Aorta (tissue), 5 donors: ENCODE measurements at regions of chr1 and their contacts with region 1.

Region 1: GRCh38 chr1:19596714-19597495 is 47.2 kb upstream of the NBL1 start:
- DNase-seq: peak; percentile 98
- ATAC-seq: peak; percentile 98
- H3K4me3 ChIP-seq: peak overlapping the region; percentile 64 to 80
- H3K27ac ChIP-seq: peak overlapping the region; percentile 49 to 79
- H3K4me1 ChIP-seq: peaks cover 0 to 13% of the 10 kb centered on the region in 2 donors
- H3K27me3 ChIP-seq: no peaks in the 10 kb centered on the region

Region 2: DNA sequence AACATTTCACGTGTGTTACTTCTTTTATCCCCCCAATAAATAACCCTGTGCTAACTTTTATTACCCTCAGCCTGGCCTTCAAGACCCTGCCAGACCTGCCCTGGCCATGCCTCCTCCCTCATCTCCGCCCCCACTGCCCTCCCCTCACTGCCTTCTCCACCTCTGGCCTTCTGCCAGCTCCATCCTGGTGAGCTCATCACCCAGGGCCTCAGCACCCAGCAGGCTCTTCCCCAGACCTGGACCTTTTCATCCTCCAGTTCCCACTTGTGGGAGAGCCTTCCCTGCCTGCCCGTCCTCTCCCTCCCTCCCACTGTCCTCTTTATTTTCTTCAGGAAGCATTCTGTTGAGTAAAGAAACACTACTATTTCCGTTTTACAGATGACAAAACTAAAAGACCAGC is 212.8 kb before region 1 on chr1:
- intact Hi-C with region 1: loop called in 1 of 2 experiments (anchors 10 kb)
- DNase-seq: peak; percentile 74 to 89
- ATAC-seq: no peak
- H3K4me3 ChIP-seq: no peak overlapping the region
- H3K27ac ChIP-seq: peak overlapping the region in 1 of 2 donors; percentile 82
- H3K4me1 ChIP-seq: peaks cover 2 to 9% of the 10 kb centered on the region in 2 donors
- H3K27me3 ChIP-seq: no peaks in the 10 kb centered on the region

Region 3: DNA sequence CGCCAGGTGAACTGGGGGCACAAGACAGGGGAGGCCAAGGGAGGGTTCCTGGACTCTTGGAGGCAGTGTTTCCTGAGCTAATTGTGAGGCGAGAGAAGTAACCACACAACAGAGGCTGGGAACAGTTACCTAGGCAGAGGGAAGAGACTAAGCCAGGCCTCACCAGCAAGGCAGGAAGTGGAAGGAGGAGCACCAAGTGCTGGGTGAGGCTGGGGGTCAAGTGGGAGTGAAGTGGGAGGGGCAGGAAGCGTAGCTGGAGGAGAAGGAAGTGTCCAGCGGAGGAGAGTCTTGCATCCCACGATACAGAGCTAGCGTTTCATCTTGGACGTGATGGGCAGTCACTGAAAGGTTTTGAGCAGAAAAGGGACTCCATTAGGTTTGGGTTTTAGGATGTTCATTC is 63.3 kb before region 1 on chr1:
- intact Hi-C with region 1: no loop called
- DNase-seq: peak in 1 of 2 donors; percentile 64
- ATAC-seq: no peak
- H3K4me3 ChIP-seq: no peak overlapping the region
- H3K27ac ChIP-seq: no peak overlapping the region
- H3K4me1 ChIP-seq: peaks cover 0 to 1% of the 10 kb centered on the region in 2 donors
- H3K27me3 ChIP-seq: no peaks in the 10 kb centered on the region

Region 4: GRCh38 chr1:19643602-19644394 is 46.9 kb after region 1 on chr1 and contains the start of gene NBL1:
- intact Hi-C with region 1: loop called (anchors 1 to 5 kb)
- DNase-seq: peak; percentile 86 to 92
- ATAC-seq: peak; percentile 81
- H3K4me3 ChIP-seq: peak within 1 kb of the TSS; percentile 38 to 89
- H3K27ac ChIP-seq: peak within 1 kb of the TSS; percentile 73 to 78
- H3K4me1 ChIP-seq: no peaks in the 10 kb centered on the region
- H3K27me3 ChIP-seq: no peaks in the 10 kb centered on the region
- total RNA-seq, gene NBL1: 134 to 188 TPM

Region 5: DNA sequence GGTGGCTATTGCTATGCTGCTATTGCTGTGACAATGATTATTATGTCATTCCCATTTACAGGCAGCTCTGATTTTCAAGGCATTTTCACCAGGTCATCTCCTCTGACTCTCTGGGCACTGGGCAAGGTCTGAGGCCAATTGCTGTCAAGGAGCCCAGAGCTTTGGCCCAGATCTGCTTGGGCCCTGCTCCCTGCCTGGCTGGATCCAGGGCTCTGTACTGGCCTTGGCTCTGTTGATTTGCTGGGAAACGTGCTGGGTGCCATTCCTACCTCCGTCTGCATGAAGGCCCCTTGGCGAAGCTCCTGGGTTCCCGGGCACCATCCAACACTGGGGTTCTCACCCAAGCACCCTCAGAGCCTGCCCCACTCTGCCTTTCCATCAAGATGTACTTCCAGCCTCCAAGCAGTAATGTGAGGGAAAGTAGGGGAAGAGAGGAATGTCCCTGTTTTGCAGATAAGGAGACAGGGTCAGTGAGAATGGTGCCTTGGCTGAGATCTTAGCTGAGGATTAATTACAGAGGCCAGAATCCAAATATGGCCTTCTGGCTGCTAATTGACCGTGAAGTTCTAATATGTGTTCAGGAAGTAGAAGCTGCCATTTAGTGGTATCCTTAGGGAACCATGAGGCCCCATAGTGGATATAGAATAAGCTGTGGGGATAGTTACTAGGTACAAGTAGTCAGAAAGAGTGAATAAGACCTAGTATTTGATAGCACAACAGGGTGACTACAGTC is 131.7 kb after region 1 on chr1:
- intact Hi-C with region 1: no loop called
- DNase-seq: no peak
- ATAC-seq: peak; percentile 57
- H3K4me3 ChIP-seq: no peak overlapping the region
- H3K27ac ChIP-seq: peak overlapping the region in 1 of 2 donors; percentile 86
- H3K4me1 ChIP-seq: no peaks in the 10 kb centered on the region
- H3K27me3 ChIP-seq: no peaks in the 10 kb centered on the region